ENCODE measurements at regions of chr1 and their contacts with region 1.

Region 1: DNA sequence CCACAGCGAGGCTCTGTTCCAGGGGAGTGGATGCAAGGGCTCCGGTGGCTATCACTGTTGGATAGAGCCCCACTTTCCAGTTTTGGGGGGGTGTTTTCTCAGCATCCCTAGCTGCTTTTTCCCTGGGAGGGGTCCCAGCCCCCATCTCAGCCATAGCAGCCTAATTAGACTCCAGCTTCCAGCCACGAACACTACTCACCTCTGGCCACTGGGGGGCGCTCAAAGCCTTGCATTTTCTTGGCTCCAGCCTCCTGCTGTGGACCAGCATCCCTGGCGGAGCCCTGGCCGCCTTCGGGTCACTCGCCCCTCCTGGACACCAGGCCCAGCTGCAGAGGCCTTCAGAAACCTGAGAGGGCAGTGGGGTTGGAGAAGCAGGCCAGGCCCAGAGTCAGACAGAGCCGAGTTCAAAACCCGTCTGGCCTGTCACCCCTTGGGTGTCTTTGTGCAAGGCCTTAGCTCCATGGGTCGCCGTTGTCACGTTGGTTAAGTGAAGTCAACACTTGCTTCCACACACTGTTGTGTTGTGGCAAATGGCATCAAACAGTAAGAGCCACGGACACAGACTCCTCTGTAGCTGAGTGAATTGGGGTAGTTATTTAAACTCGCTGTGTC is 93.5 kb upstream of the ACTL8 start:
- DNase-seq: peak; percentile 52
- ATAC-seq: peak; percentile 18 to 58

Region 2: DNA sequence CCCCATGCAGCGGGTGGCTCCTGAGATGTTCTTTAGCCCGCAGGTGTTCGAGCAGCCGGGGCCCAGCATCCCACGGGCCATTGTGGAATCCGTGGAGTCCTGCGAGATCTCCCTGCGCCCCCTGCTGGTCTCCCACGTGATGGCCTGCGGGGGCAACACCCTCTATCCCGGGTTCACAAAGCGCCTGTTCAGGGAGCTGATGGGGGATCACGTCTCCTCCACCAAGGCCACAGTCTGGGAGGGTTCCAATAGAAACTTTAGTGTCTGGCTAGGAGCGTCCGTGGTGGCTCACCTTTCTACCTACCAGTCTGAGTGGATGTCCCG is 164.5 kb after region 1 on chr1:
- intact Hi-C with region 1: loop called (anchors 10 kb)
- DNase-seq: peak; percentile 51
- ATAC-seq: peak in 1 of 2 donors; percentile 51

Region 3: DNA sequence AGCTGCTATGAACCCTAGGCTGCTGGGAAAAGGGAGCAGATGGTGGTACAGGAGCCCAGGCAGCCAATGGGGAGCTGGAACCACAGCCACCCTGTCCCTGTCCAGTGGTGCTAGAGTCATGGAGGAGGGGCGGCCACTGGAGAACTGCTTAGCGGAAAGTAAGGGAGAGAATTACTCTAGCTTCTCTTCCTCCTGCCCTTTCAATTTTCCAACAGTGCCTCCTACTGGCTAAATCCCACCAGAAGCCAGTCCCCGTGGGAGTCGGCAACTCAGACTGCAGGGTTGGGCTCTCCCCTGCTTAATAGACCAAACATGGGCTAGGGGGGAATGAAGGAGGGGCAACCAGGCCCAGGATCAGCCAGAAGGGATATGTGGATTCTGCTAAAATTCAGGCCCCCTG is 248.0 kb after region 1 on chr1:
- intact Hi-C with region 1: loop called (anchors 10 kb)
- DNase-seq: no peak
- ATAC-seq: peak; percentile 53 to 75

Region 4: DNA sequence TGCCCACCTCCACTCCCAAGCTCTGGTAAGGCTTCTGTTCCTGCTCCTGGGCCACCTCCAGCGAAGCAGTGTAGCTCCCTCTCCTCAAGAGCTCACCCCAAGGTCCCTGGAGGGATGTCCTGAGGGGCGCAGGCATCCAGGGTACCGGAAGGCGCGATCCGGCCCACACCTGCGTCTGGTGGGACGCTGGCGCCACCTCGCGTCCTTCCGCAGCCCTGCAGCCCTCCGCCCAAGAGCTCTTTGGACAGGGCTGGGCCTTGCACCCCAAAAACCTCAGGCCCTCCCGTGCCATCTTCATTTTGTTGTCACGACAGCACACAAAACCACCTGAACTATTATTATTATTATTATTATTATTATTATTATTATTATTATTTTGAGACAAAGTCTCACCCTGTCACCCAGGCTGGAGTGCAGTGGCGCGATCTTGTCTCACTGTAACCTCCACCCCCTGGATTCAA is 919.8 kb after region 1 on chr1:
- intact Hi-C with region 1: loop called in 1 of 2 experiments (anchors 5 kb)
- DNase-seq: no peak
- ATAC-seq: peak in 1 of 2 donors; percentile 31

Measured in left cardiac atrium (tissue), 4 donors.